ENCODE measurements at regions of chr17 and their contacts with region 1.

Region 1: GRCh38 chr17:39153599-39154051 is 2.2 kb upstream of the PLXDC1 start:
- DNase-seq: peak; percentile 94
- ATAC-seq: peak; percentile 43
- H3K4me3 Mint-ChIP-seq: peak overlapping the region; percentile 95
- H3K27ac Mint-ChIP-seq: peak overlapping the region; percentile 95
- H3K4me1 Mint-ChIP-seq: peaks cover 40% of the 10 kb centered on the region
- H3K27me3 Mint-ChIP-seq: peaks cover 2% of the 10 kb centered on the region

Region 2: DNA sequence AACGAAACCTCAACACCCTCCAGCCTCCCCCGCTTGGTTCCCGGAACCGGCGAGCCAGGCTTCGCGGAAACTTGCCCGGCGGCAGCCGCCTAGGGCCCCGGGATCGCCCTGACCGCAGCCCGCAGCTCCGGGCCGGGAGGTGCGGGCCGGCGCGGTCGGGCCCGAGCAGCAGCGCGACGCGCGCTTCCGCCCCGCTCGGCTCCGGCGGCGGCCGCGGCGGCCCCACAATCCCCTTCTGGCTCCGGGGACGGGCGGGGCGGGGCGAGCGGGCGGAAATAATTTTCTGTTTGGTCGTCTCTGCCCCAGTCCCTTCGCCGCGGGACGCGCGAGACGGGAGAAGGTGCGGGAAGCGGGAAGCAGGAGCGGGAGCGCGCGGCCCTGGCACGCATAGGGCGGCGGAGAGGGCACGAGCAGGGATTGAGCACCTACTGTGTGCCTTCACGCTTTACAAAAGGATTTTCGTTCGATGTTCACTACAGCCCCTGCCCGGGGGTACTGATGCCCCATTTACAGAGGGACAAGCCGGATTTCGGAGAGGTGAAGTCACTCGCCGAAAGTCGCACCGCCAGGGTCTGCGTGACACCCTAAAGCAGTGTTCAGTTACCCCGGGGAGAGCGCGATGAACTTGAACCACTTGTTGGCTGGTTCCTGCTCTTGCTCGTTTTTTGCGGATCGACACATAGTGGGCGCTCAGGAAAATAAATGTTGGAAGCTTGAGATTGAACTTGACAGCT is 451.3 kb before region 1 on chr17:
- CTCF ChIA-PET with region 1: interaction called, 3 read pairs
- POLR2A ChIA-PET with region 1: no interaction called
- intact Hi-C with region 1: loop called (anchors 1 to 5 kb)
- DNase-seq: peak; percentile 92
- ATAC-seq: peak; percentile 10
- H3K4me3 Mint-ChIP-seq: peak overlapping the region; percentile 95
- H3K27ac Mint-ChIP-seq: peak overlapping the region; percentile 100
- H3K4me1 Mint-ChIP-seq: peaks cover 48% of the 10 kb centered on the region
- H3K27me3 Mint-ChIP-seq: no peaks in the 10 kb centered on the region

Region 3: DNA sequence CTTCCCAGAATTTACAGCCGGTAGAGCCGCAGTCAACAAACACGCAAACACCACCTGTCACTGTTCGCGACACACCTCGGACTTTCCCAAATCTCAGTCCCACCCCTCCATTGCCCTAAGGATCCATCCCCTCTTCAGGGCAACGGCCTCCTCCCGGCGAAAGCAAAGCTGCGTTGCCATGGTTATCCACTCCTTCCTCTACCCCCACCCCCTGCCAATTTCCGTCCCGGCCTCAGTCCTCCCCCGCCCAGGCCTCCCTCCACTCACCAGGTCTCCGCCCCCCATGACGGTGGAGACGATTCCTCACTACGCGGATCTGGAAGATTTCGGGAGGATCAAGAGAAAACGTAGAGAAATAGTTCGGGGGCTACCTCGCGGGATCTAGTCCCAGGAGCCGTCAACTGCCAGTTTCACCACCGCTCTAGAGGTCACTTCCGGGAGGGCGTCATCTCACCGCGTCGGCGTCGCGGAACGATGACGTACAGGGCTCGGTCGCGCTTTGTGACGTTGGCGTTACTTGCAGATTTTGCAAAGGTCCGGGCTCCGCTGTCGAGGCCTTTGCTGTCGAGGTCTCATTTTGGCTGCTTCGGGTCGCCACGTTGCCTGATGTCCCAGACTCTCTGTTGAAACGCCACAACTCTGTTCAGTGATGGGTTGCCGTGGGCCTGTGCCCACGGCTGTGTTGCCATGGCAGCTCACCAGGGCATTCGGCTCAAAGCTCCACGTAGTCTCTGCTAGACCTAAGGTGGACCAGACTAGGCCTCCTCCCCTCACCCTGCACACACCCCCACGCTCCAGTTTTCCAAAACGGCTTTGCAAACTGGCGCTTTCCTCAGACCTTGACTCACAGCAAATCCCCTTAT is 328.5 kb before region 1 on chr17 and contains the start of gene CWC25:
- CTCF ChIA-PET with region 1: no interaction called
- POLR2A ChIA-PET with region 1: no interaction called
- intact Hi-C with region 1: loop called in 1 of 2 experiments (anchors 1 kb)
- DNase-seq: peak; percentile 95
- ATAC-seq: peak; percentile 82
- H3K4me3 Mint-ChIP-seq: peak within 1 kb of the TSS; percentile 99
- H3K27ac Mint-ChIP-seq: peak within 1 kb of the TSS; percentile 99
- H3K4me1 Mint-ChIP-seq: peaks cover 27% of the 10 kb centered on the region
- H3K27me3 Mint-ChIP-seq: no peaks in the 10 kb centered on the region
- total RNA-seq, gene CWC25: 23.3 to 24.0 TPM

Region 4: GRCh38 chr17:38982858-38983746 is 170.5 kb before region 1 on chr17:
- CTCF ChIA-PET with region 1: interaction called, 140 read pairs
- POLR2A ChIA-PET with region 1: interaction called, 7 read pairs
- intact Hi-C with region 1: loop called (anchors 1 kb)
- DNase-seq: peak; percentile 57
- ATAC-seq: peak; percentile 72
- H3K4me3 Mint-ChIP-seq: no peak overlapping the region
- H3K27ac Mint-ChIP-seq: no peak overlapping the region
- H3K4me1 Mint-ChIP-seq: peaks cover 6% of the 10 kb centered on the region
- H3K27me3 Mint-ChIP-seq: no peaks in the 10 kb centered on the region

Region 5: DNA sequence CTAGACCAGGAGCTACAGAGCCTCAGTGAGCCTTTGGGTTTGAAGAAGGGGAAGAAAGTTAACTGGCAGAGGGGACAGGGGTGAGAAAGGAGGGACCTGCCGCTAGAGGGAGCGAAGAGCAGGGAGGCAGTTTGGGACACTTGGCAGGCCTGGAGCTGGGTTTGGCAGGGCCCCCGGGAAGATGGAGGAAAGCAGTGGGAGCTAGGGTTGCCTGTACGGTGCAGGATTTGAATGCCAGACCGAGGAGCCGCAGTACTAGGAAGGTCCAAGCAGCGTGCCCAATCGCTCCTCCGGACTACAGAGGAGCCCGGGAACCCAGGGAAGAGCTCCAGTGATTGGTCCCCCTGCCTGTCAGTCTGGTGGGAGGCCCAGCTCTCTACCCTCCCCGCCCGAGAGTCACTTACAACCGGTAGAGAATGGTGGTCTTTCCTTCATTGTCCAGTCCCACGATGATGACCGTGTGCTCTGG is 11.1 kb after region 1 on chr17:
- CTCF ChIA-PET with region 1: interaction called, 79 read pairs
- POLR2A ChIA-PET with region 1: interaction called, 9 read pairs
- intact Hi-C with region 1: loop called in 1 of 2 experiments (anchors 1 kb)
- DNase-seq: peak; percentile 86
- ATAC-seq: peak; percentile 96
- H3K4me3 Mint-ChIP-seq: peak overlapping the region; percentile 85
- H3K27ac Mint-ChIP-seq: peak overlapping the region; percentile 76
- H3K4me1 Mint-ChIP-seq: peaks cover 24% of the 10 kb centered on the region
- H3K27me3 Mint-ChIP-seq: peaks cover 24% of the 10 kb centered on the region

Region 6: GRCh38 chr17:39244600-39245570 is 91.3 kb after region 1 on chr17:
- CTCF ChIA-PET with region 1: interaction called, 11 read pairs
- POLR2A ChIA-PET with region 1: no interaction called
- intact Hi-C with region 1: no loop called
- DNase-seq: peak; percentile 93
- ATAC-seq: peak; percentile 96
- H3K4me3 Mint-ChIP-seq: no peak overlapping the region
- H3K27ac Mint-ChIP-seq: no peak overlapping the region
- H3K4me1 Mint-ChIP-seq: peaks cover 3% of the 10 kb centered on the region
- H3K27me3 Mint-ChIP-seq: no peaks in the 10 kb centered on the region

Region 7: DNA sequence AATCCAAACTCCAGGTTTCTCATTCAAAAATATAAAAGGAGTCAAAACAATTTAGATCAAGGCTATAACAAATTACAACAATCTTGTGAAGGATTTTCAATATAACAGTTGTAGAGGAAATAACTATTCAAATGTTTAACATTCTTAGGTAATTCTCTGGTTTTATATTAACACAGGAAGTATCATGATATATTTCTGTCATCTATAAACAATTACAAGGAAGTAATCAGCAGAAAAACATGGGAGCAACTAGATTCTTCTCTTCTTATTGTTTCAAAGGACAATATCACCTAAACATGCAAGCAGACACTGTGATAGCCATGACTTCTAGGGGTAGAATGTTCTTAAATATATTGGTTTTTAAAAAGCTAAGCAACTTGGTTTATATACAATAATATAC is 197.9 kb after region 1 on chr17:
- CTCF ChIA-PET with region 1: no interaction called
- POLR2A ChIA-PET with region 1: no interaction called
- intact Hi-C with region 1: no loop called
- DNase-seq: no peak
- ATAC-seq: no peak
- H3K4me3 Mint-ChIP-seq: no peak overlapping the region
- H3K27ac Mint-ChIP-seq: no peak overlapping the region
- H3K4me1 Mint-ChIP-seq: no peaks in the 10 kb centered on the region
- H3K27me3 Mint-ChIP-seq: no peaks in the 10 kb centered on the region

Measured in activated CD4-positive, alpha-beta T cell treated with anti-CD3 and anti-CD28 coated beads for 36 hours (primary cell).